Spleen (tissue), 13 donors: ENCODE measurements at regions of chr15 and their contacts with region 1.

Region 1: GRCh38 chr15:46502668-46503067 is 867.8 kb downstream of the SQOR start:
- DNase-seq: no peak
- H3K4me3 ChIP-seq: no peak overlapping the region
- H3K27ac ChIP-seq: no peak overlapping the region
- H3K4me1 ChIP-seq: no peaks in the 10 kb centered on the region
- H3K27me3 ChIP-seq: no peaks in the 10 kb centered on the region
- CTCF ChIP-seq: peak in 4 of 11 experiments; percentile 9 to 31 (median 27)
- POLR2A ChIP-seq: no peak

Region 2: DNA sequence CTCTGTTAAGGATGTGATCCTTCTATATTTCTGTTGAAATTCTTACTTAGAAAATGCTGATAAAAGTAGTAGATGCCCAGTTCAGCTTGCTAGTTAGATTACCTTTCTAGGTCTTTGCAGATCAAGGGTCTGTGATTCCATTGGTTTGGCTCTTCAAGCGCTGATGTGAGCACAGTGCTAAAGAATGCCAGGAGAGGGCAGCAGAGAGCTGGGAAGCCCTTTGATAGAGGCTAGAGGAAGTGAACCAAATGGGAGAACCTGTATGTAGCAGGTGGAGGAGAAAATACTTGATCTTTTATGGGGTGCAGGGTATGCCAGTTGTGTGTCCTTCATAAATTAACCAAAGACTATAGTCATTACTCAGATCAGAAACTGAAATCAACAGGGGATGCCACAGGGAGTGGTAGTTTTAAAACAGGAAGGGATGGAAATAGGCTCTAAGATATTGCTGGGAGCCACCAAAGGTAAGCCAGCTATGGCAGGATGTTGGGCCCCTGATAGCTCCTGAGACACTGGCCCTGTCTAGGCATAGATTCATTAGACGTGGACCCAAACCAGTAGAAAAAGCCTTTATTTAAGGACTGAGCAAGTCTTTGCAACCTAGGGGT is 190.4 kb before region 1 on chr15:
- intact Hi-C with region 1: loop called (anchors 10 kb)
- DNase-seq: no peak
- H3K4me3 ChIP-seq: no peak overlapping the region
- H3K27ac ChIP-seq: no peak overlapping the region
- H3K4me1 ChIP-seq: peaks cover 0 to 3% (median 0%) of the 10 kb centered on the region in 6 donors
- H3K27me3 ChIP-seq: peaks cover 0 to 5% (median 0%) of the 10 kb centered on the region in 7 donors
- CTCF ChIP-seq: peak; percentile 53 to 85 (median 72)
- POLR2A ChIP-seq: no peak